ENCODE measurements at regions of chr3 and their contacts with region 1.

Region 1: DNA sequence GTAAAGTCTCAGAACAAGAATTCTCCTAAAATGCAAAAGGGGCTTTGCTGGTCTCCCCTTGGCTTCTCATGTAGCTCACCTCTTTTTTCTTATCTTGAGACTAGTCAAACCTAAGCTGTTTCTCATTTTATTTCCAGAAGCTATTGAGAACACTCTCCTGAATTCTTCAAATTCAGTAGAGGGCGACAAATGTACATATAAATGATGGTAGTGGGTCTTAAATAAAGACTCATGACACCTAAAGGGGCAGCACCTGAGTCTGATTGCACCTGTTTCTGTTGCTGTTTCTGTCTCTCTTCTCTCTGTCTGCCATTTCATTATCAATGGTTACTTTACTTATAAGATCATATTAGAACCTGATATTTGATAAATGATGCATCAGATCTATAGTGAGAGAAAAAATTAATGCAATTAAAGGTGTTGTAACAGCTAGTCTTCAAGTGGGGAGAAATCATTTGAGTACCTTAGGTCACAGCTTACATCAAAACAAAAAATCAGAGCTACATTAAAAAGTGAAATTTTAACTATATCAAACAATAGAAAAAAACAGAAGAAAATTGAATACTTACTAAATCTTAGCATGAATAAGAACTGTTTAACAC is 7.0 kb downstream of the ADIPOQ start:
- DNase-seq: peak in 5 of 10 donors; percentile 13 to 77 (median 60)
- ATAC-seq: peak; percentile 99 to 100
- H3K4me3 Mint-ChIP-seq: peak overlapping the region in 1 of 10 donors; percentile 41
- H3K27ac Mint-ChIP-seq: peak overlapping the region in 6 of 10 donors; percentile 51 to 84 (median 71)
- H3K4me1 Mint-ChIP-seq: peaks cover 12 to 29% (median 19%) of the 10 kb centered on the region in 4 donors
- H3K27me3 Mint-ChIP-seq: peaks cover 0 to 6% (median 5%) of the 10 kb centered on the region in 5 donors

Region 2: DNA sequence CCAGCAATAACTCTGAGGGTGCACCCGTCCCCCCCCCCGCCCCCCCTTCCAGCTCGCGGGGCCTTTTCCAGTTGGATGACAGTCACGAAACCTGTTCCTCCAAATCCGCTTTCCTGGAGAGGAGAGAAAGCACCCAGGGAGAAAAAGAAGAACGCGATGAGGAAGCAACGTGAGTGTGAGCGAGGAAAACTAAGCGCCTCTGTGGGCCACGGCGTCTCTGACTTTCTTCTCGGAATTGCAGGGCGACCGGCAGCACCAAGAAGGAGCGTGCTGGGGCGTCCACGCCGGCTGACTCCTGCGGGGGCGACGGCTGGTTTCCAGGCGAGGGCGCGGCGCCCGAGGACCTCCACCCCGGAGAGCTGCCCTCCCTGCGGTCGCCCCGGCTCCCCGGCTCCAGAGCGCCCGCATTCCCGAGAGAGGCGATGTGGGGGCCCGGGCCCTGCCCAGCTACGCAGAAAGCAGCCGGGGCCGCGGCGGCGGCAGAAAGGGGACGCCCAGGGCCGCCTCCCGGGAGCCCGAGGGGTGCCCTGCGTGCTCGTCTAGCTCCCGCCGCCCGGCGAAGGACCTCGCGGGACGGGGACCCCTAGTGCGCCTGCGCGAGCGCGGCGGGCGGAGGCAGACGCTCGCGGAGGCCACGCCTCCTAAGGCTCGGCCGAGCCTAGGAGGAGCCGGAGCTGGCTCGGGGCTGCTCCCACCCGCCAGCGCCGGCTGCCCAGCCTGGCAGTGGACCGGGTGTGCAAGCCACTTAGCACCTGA is 22.3 kb before region 1 on chr3:
- POLR2A ChIA-PET with region 1: no interaction called
- DNase-seq: peak; percentile 76 to 91 (median 85)
- ATAC-seq: peak; percentile 89 to 92
- H3K4me3 Mint-ChIP-seq: peak overlapping the region; percentile 55 to 85 (median 76)
- H3K27ac Mint-ChIP-seq: peak overlapping the region in 1 of 10 donors; percentile 29
- H3K4me1 Mint-ChIP-seq: peaks cover 8 to 26% (median 21%) of the 10 kb centered on the region in 4 donors
- H3K27me3 Mint-ChIP-seq: peaks cover 36 to 71% (median 50%) of the 10 kb centered on the region in 5 donors

Region 3: GRCh38 chr3:186871403-186871924 is 22.0 kb after region 1 on chr3:
- POLR2A ChIA-PET with region 1: no interaction called
- DNase-seq: peak in 1 of 10 donors; percentile 9
- ATAC-seq: peak; percentile 38 to 39
- H3K4me3 Mint-ChIP-seq: peak overlapping the region in 6 of 10 donors; percentile 9 to 64 (median 38)
- H3K27ac Mint-ChIP-seq: peak overlapping the region in 9 of 10 donors; percentile 37 to 89 (median 76)
- H3K4me1 Mint-ChIP-seq: peaks cover 16 to 24% (median 21%) of the 10 kb centered on the region in 4 donors
- H3K27me3 Mint-ChIP-seq: no peaks in the 10 kb centered on the region

Region 4: DNA sequence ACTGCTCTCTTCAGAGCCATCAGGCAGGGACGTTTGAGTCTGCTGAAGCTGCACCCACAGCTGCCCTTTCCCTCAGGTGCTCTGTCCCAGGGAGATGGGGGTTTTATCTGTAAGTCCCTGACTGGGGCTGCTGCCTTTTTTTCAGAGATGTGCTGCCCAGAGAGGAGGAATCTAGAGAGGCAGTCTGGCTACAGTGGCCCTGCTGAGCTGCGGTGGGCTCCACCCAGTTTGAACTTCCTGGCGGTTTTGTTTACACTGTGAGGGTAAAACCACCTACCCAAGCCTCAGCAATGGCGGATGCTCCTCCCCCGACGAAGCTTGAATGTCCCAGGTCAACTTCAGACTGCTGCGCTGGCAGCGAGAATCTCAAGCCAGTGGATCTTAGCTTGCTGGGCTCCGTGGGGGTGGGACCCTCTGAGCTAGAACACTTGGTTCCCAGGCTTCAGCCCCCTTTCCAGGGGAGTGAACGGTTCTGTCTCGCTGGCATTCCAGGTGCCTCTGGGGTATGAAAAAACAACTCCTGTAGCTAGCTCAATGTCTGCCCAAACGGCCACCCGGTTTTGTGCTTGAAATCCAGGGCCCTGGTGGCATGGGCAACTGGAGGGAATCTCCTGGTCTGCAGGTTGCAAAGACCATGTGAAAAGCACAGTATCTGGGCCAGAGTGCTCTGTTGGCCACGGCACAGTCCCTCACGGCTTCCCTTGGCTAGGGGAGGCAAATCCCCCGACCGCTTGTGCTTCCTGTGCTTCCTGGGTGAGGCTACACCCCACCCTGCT is 59.8 kb after region 1 on chr3:
- POLR2A ChIA-PET with region 1: interaction called, 17 read pairs
- DNase-seq: peak; percentile 25 to 88 (median 76)
- ATAC-seq: peak; percentile 96 to 97
- H3K4me3 Mint-ChIP-seq: peak overlapping the region; percentile 60 to 84 (median 74)
- H3K27ac Mint-ChIP-seq: peak overlapping the region; percentile 88 to 97 (median 92)
- H3K4me1 Mint-ChIP-seq: peaks cover 11 to 49% (median 37%) of the 10 kb centered on the region in 4 donors
- H3K27me3 Mint-ChIP-seq: no peaks in the 10 kb centered on the region